Common myeloid progenitor, CD34-positive (primary cell): ENCODE measurements at regions of chrX and their contacts with region 1.

Region 1: DNA sequence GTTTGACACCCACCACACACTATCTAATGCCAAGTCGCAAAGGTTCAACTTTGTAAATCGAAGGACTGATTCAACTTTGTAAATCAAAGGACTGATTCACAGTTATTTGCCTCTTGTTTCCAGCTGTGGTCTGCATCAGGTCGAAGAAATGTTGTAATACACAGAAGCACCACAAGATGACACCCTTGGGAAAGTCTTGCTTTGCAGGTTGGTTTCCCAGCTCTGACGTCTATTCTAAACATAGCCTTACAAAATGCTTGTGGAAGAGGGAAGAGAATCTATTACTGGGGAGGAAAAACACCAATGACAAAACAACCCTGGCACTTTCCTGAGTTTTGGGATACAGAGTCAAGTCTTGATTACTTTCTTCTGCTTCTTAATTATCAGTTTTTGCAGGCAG is 35.3 kb downstream of the SUPT20HL1 start:
- DNase-seq: peak; percentile 57 to 77 (median 67)
- H3K4me3 ChIP-seq: no peak overlapping the region
- H3K27ac ChIP-seq: no peak overlapping the region
- H3K4me1 ChIP-seq: peaks cover 0 to 2% (median 0%) of the 10 kb centered on the region in 4 experiments
- H3K27me3 ChIP-seq: peaks cover 0 to 23% (median 0%) of the 10 kb centered on the region in 5 experiments

Region 2: GRCh38 chrX:24259544-24260240 is 136.1 kb before region 1 on chrX:
- CTCF ChIA-PET with region 1: interaction called, 11 read pairs
- POLR2A ChIA-PET with region 1: no interaction called
- DNase-seq: peak; percentile 50 to 76 (median 75)
- H3K4me3 ChIP-seq: no peak overlapping the region
- H3K27ac ChIP-seq: no peak overlapping the region
- H3K4me1 ChIP-seq: peaks cover 0 to 13% (median 6%) of the 10 kb centered on the region in 4 experiments
- H3K27me3 ChIP-seq: peaks cover 0 to 4% (median 0%) of the 10 kb centered on the region in 5 experiments

Region 3: DNA sequence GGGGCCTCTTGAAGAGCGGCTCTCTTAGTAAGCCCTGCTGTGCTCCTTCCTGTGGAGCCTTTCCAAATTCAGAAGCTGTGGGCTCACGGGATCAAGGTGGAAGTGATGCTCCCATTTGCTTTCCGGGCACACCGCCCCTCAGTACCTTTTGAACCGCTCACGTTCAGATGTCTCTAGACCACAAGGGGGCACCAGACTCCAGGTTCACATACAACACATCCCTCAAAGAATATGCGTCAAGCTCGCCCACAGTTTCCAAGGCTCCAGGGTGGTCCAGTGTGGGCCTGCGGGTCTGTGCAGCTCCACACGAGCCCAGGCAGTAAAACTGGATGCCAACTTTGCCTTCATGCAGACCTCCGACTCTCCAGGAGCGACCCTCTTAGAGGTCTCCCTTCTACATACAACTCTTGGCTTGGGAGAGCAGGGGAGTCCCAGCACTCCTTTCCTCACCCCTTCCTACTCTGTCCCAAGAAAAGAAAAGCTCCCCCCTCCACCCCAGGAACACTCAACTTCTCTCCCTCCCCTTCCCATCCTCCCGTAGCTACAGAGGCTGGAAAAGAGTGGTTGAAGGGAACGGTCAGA is 24.3 kb before region 1 on chrX:
- CTCF ChIA-PET with region 1: interaction called, 17 read pairs
- POLR2A ChIA-PET with region 1: no interaction called
- DNase-seq: peak; percentile 60 to 82 (median 74)
- H3K4me3 ChIP-seq: peak overlapping the region in 4 of 7 experiments; percentile 2 to 54 (median 35)
- H3K27ac ChIP-seq: no peak overlapping the region
- H3K4me1 ChIP-seq: peaks cover 0 to 10% (median 1%) of the 10 kb centered on the region in 4 experiments
- H3K27me3 ChIP-seq: peaks cover 0 to 32% (median 0%) of the 10 kb centered on the region in 5 experiments

Region 4: DNA sequence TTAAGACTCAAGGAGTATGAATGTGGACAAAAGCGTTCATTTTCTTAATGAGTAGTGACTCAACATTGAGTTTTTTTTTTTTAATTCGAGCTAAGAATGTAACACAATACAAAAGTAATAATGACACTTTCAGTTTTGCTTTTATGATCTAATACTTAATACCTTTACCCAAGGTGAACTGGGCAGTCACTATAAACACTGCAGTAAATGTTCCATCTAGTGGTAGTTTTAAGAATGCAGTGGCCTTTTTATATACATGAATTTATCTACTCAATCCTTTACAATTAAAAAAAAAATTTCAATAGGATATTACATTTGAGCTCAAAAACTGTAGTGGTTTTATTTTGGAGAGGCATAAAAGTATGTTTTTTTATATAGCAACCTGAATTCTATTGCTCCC is 103.2 kb after region 1 on chrX:
- CTCF ChIA-PET with region 1: interaction called, 201 read pairs
- POLR2A ChIA-PET with region 1: interaction called, 4 read pairs
- DNase-seq: peak; percentile 38 to 67 (median 61)
- H3K4me3 ChIP-seq: no peak overlapping the region
- H3K27ac ChIP-seq: no peak overlapping the region
- H3K4me1 ChIP-seq: peaks cover 4 to 12% (median 5%) of the 10 kb centered on the region in 4 experiments
- H3K27me3 ChIP-seq: peaks cover 0 to 6% (median 0%) of the 10 kb centered on the region in 5 experiments

Region 5: DNA sequence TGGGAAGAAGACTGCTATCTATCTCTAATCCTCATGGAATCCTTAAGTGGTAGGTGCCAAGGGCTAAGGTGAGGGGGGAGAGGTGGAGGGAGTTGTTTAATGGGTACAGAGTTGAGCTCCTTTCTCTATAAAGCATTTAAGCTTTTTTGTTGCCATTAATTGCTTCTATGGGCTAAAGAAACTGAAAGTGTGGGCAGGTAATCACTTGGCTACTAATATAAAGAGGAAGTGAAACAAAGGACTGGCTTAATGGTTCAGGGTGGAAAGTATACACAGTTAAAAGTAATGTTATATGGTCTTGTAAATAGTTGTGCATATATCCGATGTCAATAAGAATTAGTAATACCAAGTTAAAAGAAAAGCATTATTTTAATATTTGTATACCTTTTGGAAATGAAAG is 381.9 kb after region 1 on chrX:
- CTCF ChIA-PET with region 1: no interaction called
- POLR2A ChIA-PET with region 1: no interaction called
- DNase-seq: peak; percentile 0 to 43 (median 19)
- H3K4me3 ChIP-seq: no peak overlapping the region
- H3K27ac ChIP-seq: no peak overlapping the region
- H3K4me1 ChIP-seq: no peaks in the 10 kb centered on the region
- H3K27me3 ChIP-seq: no peaks in the 10 kb centered on the region